Left ventricle myocardium superior (tissue), 1 donor: ENCODE measurements at regions of chr5 and their contacts with region 1.

Region 1: DNA sequence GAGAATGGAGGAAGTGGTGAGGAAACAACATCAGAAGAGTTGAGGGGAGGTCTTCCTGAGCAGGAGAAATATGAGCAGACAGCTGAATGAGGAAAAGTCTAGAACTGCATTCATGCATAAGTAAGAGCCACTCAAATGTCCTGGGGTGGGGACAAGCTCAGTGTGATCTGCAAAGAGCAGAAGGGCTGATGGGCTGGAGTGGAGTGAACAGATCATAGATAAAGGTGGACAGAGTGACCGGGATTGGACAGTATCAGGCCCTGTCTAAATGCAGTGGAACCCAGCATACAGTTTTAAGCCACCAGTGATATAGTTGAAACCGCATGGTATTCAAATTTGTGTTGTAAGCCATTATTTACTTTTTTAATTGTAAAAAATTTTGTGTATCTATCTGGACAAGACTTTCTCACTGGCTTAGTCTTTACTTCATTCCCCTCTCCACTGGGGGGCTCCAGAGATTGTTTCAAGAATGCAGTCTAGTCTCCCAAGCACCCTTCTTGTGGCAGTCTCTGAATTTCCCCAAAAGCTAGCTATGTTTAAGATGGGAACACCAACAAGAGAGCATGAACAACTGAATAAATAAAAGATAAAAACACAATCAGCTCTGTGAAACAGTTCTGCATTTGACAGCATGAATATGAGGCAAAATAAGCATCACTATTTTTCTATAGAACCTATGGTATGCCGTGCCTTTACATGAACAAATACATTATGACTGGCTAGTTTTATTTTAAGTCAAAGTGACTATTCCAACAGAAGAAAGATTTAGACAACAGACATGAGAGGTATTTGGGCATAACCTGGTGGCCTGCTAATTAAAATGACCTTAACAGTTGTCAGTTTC is 10.7 kb upstream of the STK32A start:
- DNase-seq: no peak
- ATAC-seq: peak; percentile 75

Region 2: GRCh38 chr5:146867996-146868708 is 356.0 kb before region 1 on chr5:
- intact Hi-C with region 1: no loop called
- DNase-seq: no peak
- ATAC-seq: no peak

Region 3: DNA sequence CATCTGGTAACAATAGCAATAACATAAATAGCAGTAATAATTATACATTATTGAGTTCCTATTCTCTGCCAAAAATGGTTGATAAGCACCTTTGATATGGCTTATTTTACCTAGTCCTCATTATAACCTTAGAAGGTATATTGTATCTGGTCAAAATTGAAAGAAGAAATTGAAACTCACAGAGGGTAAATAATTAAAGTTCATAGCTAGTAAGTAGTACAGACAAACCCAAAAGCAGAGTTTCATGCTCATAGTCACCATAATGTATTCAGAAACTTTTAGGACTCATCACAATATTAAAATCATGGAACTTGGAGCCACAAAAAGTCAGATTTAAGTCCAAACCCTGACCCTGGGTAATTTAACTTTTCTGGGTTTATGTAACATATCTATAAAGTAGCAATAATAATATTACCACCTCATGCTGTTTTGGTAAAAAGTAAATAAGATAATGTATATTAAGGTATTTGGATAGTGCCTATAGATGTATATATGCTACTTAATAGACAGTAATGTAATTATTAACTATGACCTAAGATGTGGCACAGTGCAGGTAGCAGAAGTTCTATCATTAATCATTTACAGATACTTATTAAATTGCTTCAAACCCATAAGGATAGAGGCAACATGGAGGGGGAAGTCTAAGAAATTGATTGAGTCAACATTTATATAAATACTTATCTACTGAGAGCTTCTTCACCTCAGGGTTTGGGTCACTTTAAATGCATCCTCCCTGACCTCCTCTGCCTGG is 43.1 kb after region 1 on chr5:
- intact Hi-C with region 1: no loop called
- DNase-seq: no peak
- ATAC-seq: no peak

Region 4: GRCh38 chr5:147286296-147286695 is 62.1 kb after region 1 on chr5:
- intact Hi-C with region 1: no loop called
- DNase-seq: no peak
- ATAC-seq: no peak

Region 5: GRCh38 chr5:147369742-147370374 is 145.7 kb after region 1 on chr5:
- intact Hi-C with region 1: loop called (anchors 5 kb)
- DNase-seq: no peak
- ATAC-seq: no peak

Region 6: DNA sequence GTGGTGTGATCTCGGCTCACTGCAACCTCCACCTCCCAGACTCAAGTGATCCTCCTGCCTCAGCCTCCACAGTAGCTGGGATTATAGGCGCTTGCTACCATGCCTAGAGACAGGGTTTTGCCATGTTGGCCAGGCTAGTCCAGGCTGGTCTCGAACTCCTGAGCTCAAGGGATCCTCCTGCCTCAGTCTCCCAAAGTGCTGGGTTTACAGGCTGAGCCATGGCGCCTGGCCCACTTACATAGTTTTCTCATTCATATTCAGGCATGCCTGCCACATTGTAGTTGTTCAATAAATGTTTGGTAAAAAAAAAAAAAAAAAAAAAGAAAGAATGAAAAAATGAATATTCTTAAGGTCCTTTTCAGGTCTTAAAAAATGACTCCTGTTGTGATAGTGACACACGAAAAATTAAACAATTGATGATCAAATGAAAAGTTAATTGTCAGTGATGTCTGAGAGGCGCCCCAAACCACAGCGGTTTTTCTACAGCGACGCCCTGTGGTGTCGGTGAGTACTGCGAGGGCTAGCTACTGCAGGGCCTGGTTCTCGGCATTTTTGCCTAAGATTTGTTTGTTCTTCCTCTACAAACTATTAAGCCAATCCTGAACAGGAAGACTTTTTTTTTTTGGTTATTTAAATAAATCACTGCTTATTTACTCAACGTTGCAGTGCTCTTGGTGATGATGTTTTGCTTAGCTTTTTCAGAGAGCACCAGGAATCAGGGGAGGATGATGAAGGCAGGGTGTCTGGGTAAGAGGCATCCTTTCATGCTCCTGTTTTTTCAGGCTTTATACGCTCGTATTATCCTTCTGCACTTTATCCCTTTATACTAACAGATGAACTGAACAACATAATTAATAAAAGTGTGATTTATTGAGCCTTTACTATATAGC is 352.7 kb after region 1 on chr5:
- intact Hi-C with region 1: loop called (anchors 10 kb)
- DNase-seq: peak; percentile 76
- ATAC-seq: peak; percentile 70